ENCODE measurements at regions of chr1 and their contacts with region 1.

Region 1: DNA sequence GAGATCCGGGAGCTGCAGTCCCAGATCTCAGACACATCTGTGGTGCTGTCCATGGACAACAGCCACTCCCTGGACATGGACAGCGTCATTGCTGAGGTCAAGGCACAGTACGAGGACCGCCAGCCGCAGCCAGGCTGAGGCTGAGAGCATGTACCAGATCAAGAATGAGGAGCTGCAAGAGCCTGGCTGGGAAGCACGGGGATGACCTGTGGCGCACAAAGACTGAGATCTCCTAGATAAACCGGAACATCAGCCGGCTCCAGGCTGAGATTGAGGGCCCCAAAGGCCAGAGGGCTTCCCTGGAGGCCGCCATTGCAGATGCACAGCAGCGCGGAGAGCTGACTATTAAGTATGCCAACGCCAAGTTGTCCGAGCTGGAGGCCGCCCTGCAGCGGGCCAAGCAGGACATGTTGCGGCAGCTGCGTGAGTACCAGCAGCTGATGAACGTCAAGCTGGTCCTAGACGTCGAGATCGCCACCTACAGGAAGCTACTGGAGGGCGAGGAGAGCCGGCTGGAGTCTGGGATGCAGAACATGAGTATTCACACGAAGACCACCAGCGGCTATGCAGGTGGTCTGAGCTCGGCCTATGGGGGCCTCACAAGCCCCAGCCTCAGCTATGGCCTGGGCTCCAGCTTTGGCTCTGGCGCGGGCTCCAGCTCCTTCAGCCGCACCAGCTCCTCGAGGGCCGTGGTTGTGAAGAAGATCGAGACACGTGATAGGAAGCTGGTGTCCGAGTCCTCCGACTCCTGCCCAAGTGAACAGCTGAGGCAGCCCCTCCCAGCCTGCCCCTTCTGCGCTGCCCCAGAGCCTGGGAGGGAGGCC is 25.5 kb downstream of the ETV3L start:
- DNase-seq: peak; percentile 66
- H3K4me3 ChIP-seq: no peak overlapping the region
- H3K27ac ChIP-seq: no peak overlapping the region
- H3K4me1 ChIP-seq: no peaks in the 10 kb centered on the region
- H3K27me3 ChIP-seq: peaks cover 23 to 29% of the 10 kb centered on the region in 2 experiments
- CTCF ChIP-seq: peak; percentile 52 to 77
- POLR2A ChIP-seq: no peak

Region 2: GRCh38 chr1:156948708-156949107 is 125.4 kb before region 1 on chr1:
- CTCF ChIA-PET with region 1: interaction called, 22 read pairs
- POLR2A ChIA-PET with region 1: no interaction called
- dilution Hi-C with region 1: no loop called
- intact Hi-C with region 1: no loop called
- DNase-seq: no peak
- H3K4me3 ChIP-seq: no peak overlapping the region
- H3K27ac ChIP-seq: no peak overlapping the region
- H3K4me1 ChIP-seq: no peaks in the 10 kb centered on the region
- H3K27me3 ChIP-seq: no peaks in the 10 kb centered on the region
- CTCF ChIP-seq: peak; percentile 20 to 24
- POLR2A ChIP-seq: no peak

Region 3: DNA sequence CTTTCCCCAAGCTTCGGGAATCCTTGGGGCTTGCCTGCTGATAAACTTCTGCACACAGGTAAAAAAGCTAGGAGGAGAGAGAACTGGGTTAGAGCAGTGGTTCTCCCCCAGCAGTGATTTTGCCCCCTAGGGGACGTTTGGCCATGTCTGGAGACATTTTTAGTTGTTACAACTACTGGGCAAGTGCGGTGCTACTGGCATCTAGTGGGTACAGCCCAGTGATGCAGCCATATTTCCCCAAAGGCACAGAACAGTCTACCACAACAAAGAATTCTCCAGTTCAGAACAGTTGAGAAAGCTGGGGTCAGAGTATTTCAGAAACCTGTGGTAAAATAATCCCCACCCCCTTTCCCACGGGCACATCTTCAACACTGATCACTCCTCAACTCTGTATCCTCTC is 112.4 kb before region 1 on chr1:
- CTCF ChIA-PET with region 1: interaction called, 22 read pairs
- POLR2A ChIA-PET with region 1: no interaction called
- dilution Hi-C with region 1: no loop called
- intact Hi-C with region 1: loop called (anchors 10 kb)
- DNase-seq: no peak
- H3K4me3 ChIP-seq: no peak overlapping the region
- H3K27ac ChIP-seq: no peak overlapping the region
- H3K4me1 ChIP-seq: peaks cover 6% of the 10 kb centered on the region
- H3K27me3 ChIP-seq: no peaks in the 10 kb centered on the region
- CTCF ChIP-seq: peak; percentile 18 to 26
- POLR2A ChIP-seq: no peak

Region 4: DNA sequence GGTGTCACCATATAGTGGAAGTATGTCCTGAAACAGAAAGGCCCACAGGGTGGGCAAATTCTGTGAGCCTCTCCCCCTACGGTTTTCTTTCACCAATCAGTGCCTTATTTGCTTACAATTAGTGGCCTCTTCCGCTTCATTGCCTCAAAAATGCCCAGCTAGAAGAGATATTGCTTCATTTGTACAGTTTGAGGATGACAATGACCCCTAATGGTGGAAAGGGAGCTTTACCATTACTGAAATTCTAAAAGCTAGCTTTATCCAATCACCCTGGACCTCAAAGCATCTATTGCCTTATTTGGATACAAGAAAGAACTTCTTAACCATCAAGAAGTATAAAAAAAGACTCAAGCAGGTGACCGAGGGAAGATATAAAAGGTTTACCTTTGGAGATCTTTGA is 104.1 kb before region 1 on chr1:
- CTCF ChIA-PET with region 1: interaction called, 17 read pairs
- POLR2A ChIA-PET with region 1: no interaction called
- dilution Hi-C with region 1: no loop called
- intact Hi-C with region 1: loop called (anchors 10 kb)
- DNase-seq: no peak
- H3K4me3 ChIP-seq: no peak overlapping the region
- H3K27ac ChIP-seq: no peak overlapping the region
- H3K4me1 ChIP-seq: no peaks in the 10 kb centered on the region
- H3K27me3 ChIP-seq: no peaks in the 10 kb centered on the region
- CTCF ChIP-seq: no peak
- POLR2A ChIP-seq: no peak